ENCODE measurements at regions of chr1 and their contacts with region 1.

Region 1: DNA sequence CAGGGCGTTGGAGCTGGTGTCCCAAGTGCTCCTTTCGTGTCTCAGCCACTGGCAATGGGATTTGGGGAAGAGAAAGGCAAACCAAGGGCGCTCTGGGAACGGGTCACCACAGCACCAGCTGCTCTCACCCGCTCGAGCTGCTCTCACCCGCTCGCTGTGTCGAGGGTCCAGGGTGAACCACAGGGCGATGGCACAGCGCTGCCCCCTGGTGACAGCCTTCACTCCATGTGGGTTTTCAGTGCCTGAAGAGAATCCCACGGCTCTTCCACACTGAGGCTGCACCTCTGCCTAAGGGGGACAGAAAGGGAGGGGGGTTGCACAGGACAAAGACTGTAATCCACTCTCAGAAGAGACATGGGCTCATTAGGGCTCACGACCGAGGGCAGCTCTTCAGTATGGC is 7.1 kb upstream of the CLDN19 start:
- DNase-seq: peak in 2 of 3 donors; percentile 59 to 69
- H3K4me3 ChIP-seq: no peak overlapping the region
- H3K27ac ChIP-seq: no peak overlapping the region
- H3K4me1 ChIP-seq: peaks cover 0 to 7% (median 0%) of the 10 kb centered on the region in 4 experiments
- H3K27me3 ChIP-seq: no peaks in the 10 kb centered on the region

Region 2: DNA sequence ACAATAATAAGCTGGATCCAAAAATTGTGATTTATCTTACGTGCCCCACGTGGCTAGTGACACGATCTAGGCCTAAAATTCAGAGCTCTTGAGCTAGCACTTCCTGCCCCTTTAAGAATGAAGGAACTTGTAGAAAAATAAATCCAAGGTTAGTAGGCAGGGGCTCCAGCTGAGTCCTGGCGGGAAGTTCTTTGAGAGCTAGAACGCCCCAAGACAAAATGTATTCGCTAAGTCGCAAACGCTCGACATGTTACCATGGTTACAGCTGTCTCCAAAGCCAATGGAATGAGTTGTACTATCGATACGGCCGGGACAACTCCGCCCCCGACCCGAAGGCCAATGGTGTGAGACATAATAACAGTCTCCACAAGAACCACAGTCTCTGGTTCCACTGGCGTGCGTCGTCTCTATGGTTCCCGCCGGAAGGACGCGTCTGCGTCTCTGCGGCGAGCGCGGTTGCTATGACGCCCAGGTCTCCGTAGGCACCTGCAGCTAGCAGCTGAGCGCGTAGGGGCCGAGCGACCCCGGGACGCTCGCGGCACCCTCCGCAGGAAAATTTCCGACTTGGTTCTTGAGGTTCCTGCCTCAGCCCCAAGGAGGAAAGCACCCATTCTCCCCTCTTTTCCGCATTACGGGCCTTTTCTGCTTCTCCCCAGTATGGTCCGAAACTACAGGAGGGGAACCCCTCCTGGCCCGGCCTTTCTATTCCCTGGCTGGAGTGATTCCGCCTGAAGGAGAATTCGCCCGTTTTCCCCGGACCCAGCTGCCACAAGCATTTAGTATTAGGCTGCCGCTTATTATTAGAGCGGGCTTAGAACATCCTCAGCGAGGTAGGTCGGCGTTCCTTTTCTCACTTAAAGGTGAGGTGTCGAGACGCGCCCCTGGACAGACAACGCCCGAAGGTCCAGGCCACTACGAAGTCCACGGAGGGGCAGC is 284.0 kb before region 1 on chr1 and contains the start of gene CCDC30:
- CTCF ChIA-PET with region 1: no interaction called
- POLR2A ChIA-PET with region 1: no interaction called
- DNase-seq: peak; percentile 98 to 99 (median 99)
- H3K4me3 ChIP-seq: peak within 1 kb of the TSS; percentile 64 to 96 (median 86)
- H3K27ac ChIP-seq: peak within 1 kb of the TSS; percentile 52 to 82
- H3K4me1 ChIP-seq: peaks cover 7 to 18% (median 14%) of the 10 kb centered on the region in 4 experiments
- H3K27me3 ChIP-seq: no peaks in the 10 kb centered on the region

Region 3: DNA sequence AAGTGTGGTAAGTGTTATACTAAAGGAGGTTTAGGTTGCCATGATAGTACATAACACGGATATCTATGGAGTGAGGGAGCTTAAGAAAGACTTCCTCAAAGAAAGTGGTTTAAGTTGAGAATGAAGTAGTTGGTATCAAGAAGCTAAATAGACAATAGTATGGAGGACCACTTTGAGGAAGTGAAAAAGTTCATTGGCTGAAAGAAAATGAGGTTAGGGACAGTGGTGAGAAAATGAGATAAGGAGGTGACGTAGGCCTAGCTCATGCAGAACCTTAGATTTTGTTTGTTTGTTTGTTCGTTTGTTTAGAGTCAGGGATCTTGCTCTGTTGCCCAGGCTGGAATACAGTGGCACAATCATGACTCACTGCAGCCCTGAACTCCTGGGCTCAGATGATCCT is 161.1 kb before region 1 on chr1:
- CTCF ChIA-PET with region 1: interaction called, 15 read pairs
- POLR2A ChIA-PET with region 1: no interaction called
- DNase-seq: no peak
- H3K4me3 ChIP-seq: no peak overlapping the region
- H3K27ac ChIP-seq: no peak overlapping the region
- H3K4me1 ChIP-seq: no peaks in the 10 kb centered on the region
- H3K27me3 ChIP-seq: no peaks in the 10 kb centered on the region

Region 4: DNA sequence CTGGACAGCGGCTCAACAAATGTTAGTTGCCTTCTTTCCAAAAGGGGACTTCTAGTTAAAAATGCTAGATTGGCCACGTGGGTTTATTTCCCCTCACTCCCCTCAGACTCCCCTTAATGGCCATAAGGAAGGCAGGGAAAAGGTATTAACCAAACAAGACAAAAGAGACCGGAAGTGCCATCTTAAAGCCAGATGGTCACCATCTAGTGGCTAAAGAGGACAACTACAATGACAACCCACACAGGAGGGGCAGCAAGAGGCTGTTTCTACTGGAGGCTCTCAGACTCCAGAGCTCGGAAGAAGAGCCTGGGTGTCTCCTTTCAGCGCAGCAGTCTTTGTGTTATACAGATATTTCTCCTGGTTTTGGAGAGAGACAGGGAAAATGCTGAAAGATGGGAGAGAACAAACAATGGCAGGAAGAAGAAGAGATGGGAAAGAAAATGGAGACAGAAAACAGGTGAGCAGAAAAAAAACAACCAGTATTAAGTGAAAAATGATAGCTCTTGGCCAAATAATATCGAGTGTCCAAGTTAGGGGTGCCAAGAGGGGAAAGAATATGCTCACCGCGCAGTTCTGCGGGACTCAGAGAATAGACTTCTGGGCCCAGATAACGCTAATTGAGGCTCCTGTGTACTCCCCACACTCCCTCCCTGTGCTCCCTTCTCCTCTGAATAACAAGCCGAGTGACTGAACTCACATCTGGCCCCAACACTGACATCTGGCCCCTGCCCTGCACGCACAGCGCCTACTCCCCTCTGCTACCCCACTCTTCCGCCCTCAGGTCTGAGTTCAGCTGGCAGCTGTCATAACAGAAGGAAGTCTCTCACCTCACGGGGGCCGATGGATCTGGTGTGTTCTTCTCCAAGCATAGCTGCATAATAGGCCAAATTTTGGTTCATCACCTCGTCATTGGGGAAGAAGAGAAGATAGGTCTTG is 10.1 kb after region 1 on chr1:
- CTCF ChIA-PET with region 1: interaction called, 26 read pairs
- POLR2A ChIA-PET with region 1: no interaction called
- DNase-seq: peak; percentile 51 to 69 (median 68)
- H3K4me3 ChIP-seq: no peak overlapping the region
- H3K27ac ChIP-seq: no peak overlapping the region
- H3K4me1 ChIP-seq: peaks cover 0 to 17% (median 11%) of the 10 kb centered on the region in 4 experiments
- H3K27me3 ChIP-seq: no peaks in the 10 kb centered on the region